Endothelial cell of umbilical vein (primary cell): ENCODE measurements at regions of chr3 and their contacts with region 1.

Region 1: DNA sequence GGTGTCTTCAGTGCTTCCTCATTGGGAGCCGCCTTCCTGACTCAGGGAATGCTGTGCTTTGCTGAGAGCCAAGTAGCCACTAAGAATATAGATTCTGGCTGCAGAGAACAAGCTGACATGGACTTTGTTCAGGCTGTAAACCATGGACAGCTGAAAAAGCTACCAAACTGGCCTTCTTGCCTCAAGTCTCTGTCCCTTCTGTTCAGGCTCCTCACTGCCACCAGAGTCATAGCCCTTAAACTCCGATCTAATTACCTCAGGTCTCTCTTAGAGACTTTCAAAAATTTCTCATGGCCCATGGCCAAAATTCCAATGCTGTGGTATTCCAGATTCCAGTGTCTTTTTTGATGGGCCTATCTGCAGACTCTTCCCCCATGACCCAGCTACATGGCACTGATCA is 19.4 kb upstream of the PTX3 start:
- DNase-seq: peak; percentile 50
- H3K4me3 ChIP-seq: peak overlapping the region in 1 of 3 experiments; percentile 27
- H3K27ac ChIP-seq: peak overlapping the region; percentile 95
- H3K4me1 ChIP-seq: peaks cover 43% of the 10 kb centered on the region
- H3K27me3 ChIP-seq: no peaks in the 10 kb centered on the region
- CTCF ChIP-seq: no peak
- POLR2A ChIP-seq: no peak

Region 2: GRCh38 chr3:157261000-157261399 is 156.2 kb before region 1 on chr3:
- CTCF ChIA-PET with region 1: no interaction called
- POLR2A ChIA-PET with region 1: no interaction called
- dilution Hi-C with region 1: no loop called
- intact Hi-C with region 1: no loop called
- DNase-seq: no peak
- H3K4me3 ChIP-seq: no peak overlapping the region
- H3K27ac ChIP-seq: no peak overlapping the region
- H3K4me1 ChIP-seq: peaks cover 17% of the 10 kb centered on the region
- H3K27me3 ChIP-seq: no peaks in the 10 kb centered on the region
- CTCF ChIP-seq: no peak
- POLR2A ChIP-seq: no peak

Region 3: DNA sequence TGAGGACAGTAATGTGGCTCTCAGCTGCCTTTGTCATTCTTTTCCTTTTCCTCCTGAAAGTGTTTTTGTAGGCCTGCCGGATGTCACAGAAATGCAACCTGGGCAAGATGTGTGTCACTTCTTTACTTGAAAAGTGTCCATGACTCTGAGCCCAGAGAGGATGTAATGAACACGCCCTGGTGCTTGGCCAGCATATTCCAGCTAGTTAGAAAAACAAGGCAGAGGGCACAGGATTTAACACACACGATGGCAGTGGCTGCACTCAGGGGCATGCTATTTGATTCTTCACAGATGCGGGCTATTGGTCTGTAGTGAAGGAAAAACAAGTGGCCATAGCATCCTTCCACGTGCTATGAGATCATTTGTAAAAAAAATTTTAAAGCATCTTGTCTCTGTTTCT is 10.9 kb before region 1 on chr3:
- CTCF ChIA-PET with region 1: interaction called, 3 read pairs
- POLR2A ChIA-PET with region 1: no interaction called
- dilution Hi-C with region 1: no loop called
- intact Hi-C with region 1: loop called (anchors 1 kb)
- DNase-seq: peak; percentile 39
- H3K4me3 ChIP-seq: peak overlapping the region in 1 of 3 experiments; percentile 9
- H3K27ac ChIP-seq: peak overlapping the region; percentile 15
- H3K4me1 ChIP-seq: peaks cover 24% of the 10 kb centered on the region
- H3K27me3 ChIP-seq: no peaks in the 10 kb centered on the region
- CTCF ChIP-seq: no peak
- POLR2A ChIP-seq: no peak

Region 4: DNA sequence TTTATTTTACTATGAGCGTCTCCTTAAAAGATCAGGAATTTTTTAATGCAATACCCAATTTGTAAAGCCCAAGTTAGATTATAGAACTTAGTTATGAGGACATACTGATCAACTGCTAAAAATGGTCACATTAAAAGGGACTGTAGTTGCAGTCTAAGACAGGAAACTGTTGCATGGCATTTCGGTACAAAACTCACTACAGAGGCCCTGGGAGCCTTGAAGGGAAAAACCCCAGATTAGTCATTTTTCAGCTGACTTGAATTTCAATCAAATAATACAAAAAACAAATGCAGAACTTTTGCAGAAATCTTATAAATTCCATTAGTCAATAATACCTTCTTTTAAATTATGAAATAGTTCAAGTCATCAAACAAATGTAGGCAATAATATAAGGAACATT is 12.5 kb after region 1 on chr3:
- CTCF ChIA-PET with region 1: no interaction called
- POLR2A ChIA-PET with region 1: no interaction called
- dilution Hi-C with region 1: no loop called
- intact Hi-C with region 1: no loop called
- DNase-seq: peak; percentile 72
- H3K4me3 ChIP-seq: no peak overlapping the region
- H3K27ac ChIP-seq: no peak overlapping the region
- H3K4me1 ChIP-seq: peaks cover 14% of the 10 kb centered on the region
- H3K27me3 ChIP-seq: no peaks in the 10 kb centered on the region
- CTCF ChIP-seq: no peak
- POLR2A ChIP-seq: no peak